ENCODE measurements at regions of chr7 and their contacts with region 1.

Region 1: DNA sequence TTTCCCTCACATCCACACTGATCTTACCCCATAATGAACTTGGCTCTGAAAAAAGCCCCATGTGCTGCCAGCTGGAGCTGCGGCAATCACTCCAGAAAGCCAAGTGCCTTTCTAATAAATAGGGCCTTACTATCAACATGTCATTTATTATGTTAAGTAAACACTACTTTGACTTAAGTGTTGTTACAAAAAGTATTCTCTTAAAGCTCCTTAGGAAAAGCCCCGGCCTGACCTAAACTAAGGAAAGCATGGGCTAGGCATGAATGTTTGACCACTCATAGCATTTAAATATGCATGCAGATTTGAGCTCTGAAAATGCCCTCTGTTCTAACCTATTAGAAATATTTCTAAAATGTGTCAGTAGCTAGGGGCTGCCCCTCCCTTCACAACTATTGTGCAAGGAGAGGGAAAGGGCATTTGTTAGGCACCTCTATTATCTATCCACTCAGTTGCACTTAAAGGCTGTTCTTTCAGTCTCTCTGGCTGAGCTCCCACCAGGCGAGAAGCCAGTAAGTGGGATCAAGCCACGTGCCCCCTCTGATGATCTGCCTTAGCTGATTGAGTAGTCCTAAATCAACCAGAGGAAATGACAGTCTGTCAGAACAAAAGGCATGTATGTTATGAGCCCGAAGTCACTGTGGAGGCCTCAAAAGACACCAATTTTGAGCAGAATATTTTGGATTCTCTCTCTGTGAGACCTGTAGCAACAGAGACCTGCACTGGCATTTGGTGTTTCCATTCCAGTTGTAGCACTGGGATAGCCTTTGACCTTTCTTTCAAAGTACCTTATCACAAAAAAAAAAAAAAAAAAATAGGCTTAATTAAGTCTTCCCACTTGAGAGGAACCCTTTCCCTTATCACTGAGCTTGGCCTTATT is 77.1 kb downstream of the ITGB8 start:
- DNase-seq: peak; percentile 55 to 69
- ATAC-seq: peak; percentile 69 to 97 (median 92)
- H3K4me3 ChIP-seq: no peak overlapping the region
- H3K27ac ChIP-seq: peak overlapping the region in 9 of 10 donors; percentile 26 to 75 (median 50)
- H3K4me1 ChIP-seq: peaks cover 0 to 39% (median 25%) of the 10 kb centered on the region in 9 donors
- H3K27me3 ChIP-seq: no peaks in the 10 kb centered on the region
- CTCF ChIP-seq: no peak

Region 2: GRCh38 chr7:20330240-20330927 is 77.4 kb before region 1 on chr7 and contains the start of gene ITGB8:
- intact Hi-C with region 1: loop called in 4 of 10 experiments (anchors 10 kb)
- DNase-seq: peak; percentile 74 to 78
- ATAC-seq: peak; percentile 91 to 97 (median 94)
- H3K4me3 ChIP-seq: peak within 1 kb of the TSS; percentile 47 to 74 (median 66)
- H3K27ac ChIP-seq: peak within 1 kb of the TSS; percentile 59 to 88 (median 82)
- H3K4me1 ChIP-seq: peaks cover 0 to 30% (median 12%) of the 10 kb centered on the region in 9 donors
- H3K27me3 ChIP-seq: peaks cover 0 to 37% (median 16%) of the 10 kb centered on the region in 7 donors
- CTCF ChIP-seq: no peak
- total RNA-seq, gene ITGB8: 0.93 to 10.7 (median 3.0) TPM

Region 3: GRCh38 chr7:20642166-20642565 is 234.3 kb after region 1 on chr7:
- intact Hi-C with region 1: no loop called
- DNase-seq: no peak
- ATAC-seq: no peak
- H3K4me3 ChIP-seq: no peak overlapping the region
- H3K27ac ChIP-seq: no peak overlapping the region
- H3K4me1 ChIP-seq: no peaks in the 10 kb centered on the region
- H3K27me3 ChIP-seq: no peaks in the 10 kb centered on the region
- CTCF ChIP-seq: no peak